ENCODE measurements at regions of chr9 and their contacts with region 1.

Region 1: GRCh38 chr9:97710356-97711222 is 13.4 kb upstream of the XPA start:
- DNase-seq: no peak
- H3K4me3 ChIP-seq: no peak overlapping the region
- H3K27ac ChIP-seq: no peak overlapping the region
- H3K4me1 ChIP-seq: peaks cover 0 to 11% (median 4%) of the 10 kb centered on the region in 4 donors
- H3K27me3 ChIP-seq: peaks cover 0 to 14% (median 0%) of the 10 kb centered on the region in 4 donors
- CTCF ChIP-seq: peak; percentile 83 to 92 (median 88)
- EP300 ChIP-seq: no peak
- POLR2A ChIP-seq: no peak

Region 2: GRCh38 chr9:97632985-97633858 is 77.4 kb before region 1 on chr9 and contains the starts of genes NCBP1 and TSTD2:
- intact Hi-C with region 1: no loop called
- DNase-seq: peak; percentile 99
- H3K4me3 ChIP-seq: peak within 1 kb of the TSS; percentile 72 to 95 (median 88)
- H3K27ac ChIP-seq: peak within 1 kb of the TSS; percentile 92 to 98 (median 96)
- H3K4me1 ChIP-seq: peaks cover 42 to 73% (median 66%) of the 10 kb centered on the region in 4 donors
- H3K27me3 ChIP-seq: no peaks in the 10 kb centered on the region
- CTCF ChIP-seq: no peak
- EP300 ChIP-seq: no peak
- POLR2A ChIP-seq: peak; percentile 68
- total RNA-seq, gene NCBP1: 12.0 to 14.8 (median 14.6) TPM
- total RNA-seq, gene TSTD2: 22.9 to 25.3 (median 23.5) TPM

Region 3: GRCh38 chr9:97857606-97858392 is 147.2 kb after region 1 on chr9:
- intact Hi-C with region 1: no loop called
- DNase-seq: no peak
- H3K4me3 ChIP-seq: no peak overlapping the region
- H3K27ac ChIP-seq: no peak overlapping the region
- H3K4me1 ChIP-seq: peaks cover 7 to 33% (median 27%) of the 10 kb centered on the region in 4 donors
- H3K27me3 ChIP-seq: peaks cover 6 to 98% (median 64%) of the 10 kb centered on the region in 4 donors
- CTCF ChIP-seq: no peak
- EP300 ChIP-seq: no peak
- POLR2A ChIP-seq: no peak

Region 4: DNA sequence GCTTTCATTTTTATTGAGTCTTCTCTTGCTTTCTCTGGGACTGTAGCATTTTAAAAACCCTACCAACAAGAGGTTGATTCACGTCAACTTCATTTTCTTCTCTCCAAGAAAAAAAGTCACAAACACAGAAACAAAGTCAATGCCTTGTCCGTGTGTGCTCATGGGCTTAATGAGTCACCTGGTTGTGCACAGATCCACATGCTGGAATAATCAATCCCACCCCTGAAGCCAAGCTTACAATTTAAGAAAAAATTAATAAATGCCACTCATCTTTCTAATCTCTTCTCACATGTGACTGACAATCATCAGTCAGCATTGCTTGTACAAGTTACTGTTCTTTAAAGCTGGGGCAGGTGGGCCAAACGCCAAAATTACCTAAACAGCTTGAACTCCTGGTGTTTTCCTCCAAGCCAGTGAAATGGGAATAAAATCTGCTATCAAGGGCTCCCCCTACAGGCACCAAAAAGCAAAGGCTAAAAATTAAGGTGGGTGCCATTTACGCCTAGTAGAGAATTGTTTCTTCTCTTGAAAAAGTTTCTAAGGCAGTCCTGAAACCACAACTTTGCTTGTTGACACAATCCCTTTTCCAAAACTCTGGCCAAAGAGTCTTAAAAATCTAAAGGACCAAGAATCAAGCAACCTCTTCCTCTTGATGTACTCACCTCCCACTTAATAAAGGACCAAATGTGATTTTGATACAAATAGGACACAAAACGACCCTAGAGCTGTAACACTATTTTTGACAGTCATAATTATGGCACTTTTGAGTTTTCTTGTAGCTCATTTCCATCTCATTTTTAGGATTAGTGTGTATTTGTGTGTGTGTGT is 190.4 kb after region 1 on chr9:
- intact Hi-C with region 1: loop called (anchors 1 kb)
- DNase-seq: peak; percentile 26
- H3K4me3 ChIP-seq: no peak overlapping the region
- H3K27ac ChIP-seq: no peak overlapping the region
- H3K4me1 ChIP-seq: peaks cover 0 to 7% (median 5%) of the 10 kb centered on the region in 4 donors
- H3K27me3 ChIP-seq: no peaks in the 10 kb centered on the region
- CTCF ChIP-seq: peak; percentile 61 to 80 (median 64)
- EP300 ChIP-seq: no peak
- POLR2A ChIP-seq: no peak